ENCODE measurements at regions of chr1 and their contacts with region 1.

Region 1: GRCh38 chr1:117895482-117896114 is 33.8 kb downstream of the GDAP2 start:
- DNase-seq: peak; percentile 34
- H3K4me3 ChIP-seq: no peak overlapping the region
- H3K27ac ChIP-seq: peak overlapping the region in 1 of 2 experiments; percentile 29; a peak in 1 of 4 replicates
- H3K4me1 ChIP-seq: no peaks in the 10 kb centered on the region; a peak in 2 of 4 replicates
- H3K27me3 ChIP-seq: no peaks in the 10 kb centered on the region
- CTCF ChIP-seq: peak; percentile 85
- EP300 ChIP-seq: no peak
- RAD21 ChIP-seq: peak; percentile 89

Region 2: DNA sequence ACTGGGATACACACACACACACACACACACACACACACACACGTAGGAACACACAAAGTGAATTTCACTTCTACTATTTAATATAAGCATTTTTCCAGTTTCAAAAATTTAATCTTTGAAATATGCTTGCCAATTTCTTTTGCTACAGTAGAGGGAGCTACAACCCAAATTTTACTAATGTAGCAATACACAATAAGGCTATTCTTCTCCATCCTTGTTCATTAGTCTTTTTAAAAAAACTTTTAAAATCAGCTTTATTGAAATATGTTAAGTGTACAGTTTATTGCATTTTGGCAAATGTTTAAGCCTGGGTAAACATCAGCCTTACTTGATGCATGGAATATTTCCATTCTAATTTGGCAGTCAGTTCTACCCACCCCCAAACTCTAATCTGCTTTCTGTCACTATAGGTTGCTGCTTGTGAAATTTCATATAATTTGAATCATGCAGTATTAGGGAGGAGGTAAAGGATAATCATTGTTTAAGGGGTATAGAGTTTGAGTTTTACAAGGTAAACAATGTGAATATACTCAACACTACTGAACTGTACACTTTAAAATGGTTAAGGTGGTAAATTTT is 382.8 kb before region 1 on chr1:
- CTCF ChIA-PET with region 1: interaction called, 24 read pairs
- POLR2A ChIA-PET with region 1: no interaction called
- DNase-seq: no peak
- H3K4me3 ChIP-seq: no peak overlapping the region; a peak in 1 of 4 replicates
- H3K27ac ChIP-seq: no peak overlapping the region
- H3K4me1 ChIP-seq: no peaks in the 10 kb centered on the region
- H3K27me3 ChIP-seq: no peaks in the 10 kb centered on the region
- CTCF ChIP-seq: peak; percentile 82
- EP300 ChIP-seq: no peak
- RAD21 ChIP-seq: peak; percentile 82

Region 3: GRCh38 chr1:117815926-117816325 is 79.7 kb before region 1 on chr1:
- CTCF ChIA-PET with region 1: interaction called, 57 read pairs
- POLR2A ChIA-PET with region 1: no interaction called
- DNase-seq: no peak
- H3K4me3 ChIP-seq: no peak overlapping the region
- H3K27ac ChIP-seq: peak overlapping the region in 1 of 2 experiments; percentile 64; a peak in 1 of 4 replicates
- H3K4me1 ChIP-seq: peaks cover 15 to 26% of the 10 kb centered on the region in 2 experiments; a peak in 3 of 4 replicates
- H3K27me3 ChIP-seq: no peaks in the 10 kb centered on the region
- CTCF ChIP-seq: peak; percentile 41
- EP300 ChIP-seq: no peak
- RAD21 ChIP-seq: peak; percentile 65

Region 4: DNA sequence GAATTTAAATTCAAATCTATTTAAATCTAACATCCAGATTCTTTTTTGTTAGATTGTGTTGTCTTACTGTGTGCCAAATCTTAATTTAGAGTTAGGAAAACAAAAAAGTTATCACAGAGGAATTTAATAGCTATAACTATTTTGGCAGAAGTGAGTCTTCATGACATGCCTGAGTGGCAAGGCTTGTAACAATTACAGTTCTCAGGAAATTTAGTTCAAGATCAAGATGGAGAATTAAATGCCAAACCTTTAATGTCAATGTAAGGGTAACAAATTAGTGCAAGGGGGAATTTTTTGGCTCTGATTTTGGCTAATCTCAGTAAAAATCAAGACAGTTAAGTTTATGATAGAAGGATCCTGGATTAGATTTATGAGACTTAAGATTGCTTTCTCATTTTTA is 24.6 kb before region 1 on chr1:
- CTCF ChIA-PET with region 1: interaction called, 29 read pairs
- POLR2A ChIA-PET with region 1: no interaction called
- DNase-seq: no peak
- H3K4me3 ChIP-seq: no peak overlapping the region
- H3K27ac ChIP-seq: no peak overlapping the region
- H3K4me1 ChIP-seq: no peaks in the 10 kb centered on the region
- H3K27me3 ChIP-seq: no peaks in the 10 kb centered on the region
- CTCF ChIP-seq: no peak
- EP300 ChIP-seq: no peak
- RAD21 ChIP-seq: no peak

Region 5: GRCh38 chr1:117883620-117884019 is 12.0 kb before region 1 on chr1:
- CTCF ChIA-PET with region 1: interaction called, 37 read pairs
- POLR2A ChIA-PET with region 1: interaction called, 4 read pairs
- DNase-seq: no peak
- H3K4me3 ChIP-seq: no peak overlapping the region
- H3K27ac ChIP-seq: peak overlapping the region in 1 of 2 experiments; percentile 46; a peak in 2 of 4 replicates
- H3K4me1 ChIP-seq: peaks cover 0 to 13% of the 10 kb centered on the region in 2 experiments; a peak in 2 of 4 replicates
- H3K27me3 ChIP-seq: no peaks in the 10 kb centered on the region
- CTCF ChIP-seq: no peak
- EP300 ChIP-seq: no peak
- RAD21 ChIP-seq: no peak

Region 6: GRCh38 chr1:117929173-117929989 is 33.8 kb after region 1 on chr1 and contains the starts of genes GDAP2 and WDR3:
- CTCF ChIA-PET with region 1: interaction called, 11 read pairs
- POLR2A ChIA-PET with region 1: interaction called, 3 read pairs
- DNase-seq: peak; percentile 91
- H3K4me3 ChIP-seq: peak within 1 kb of the TSS; percentile 88 to 100
- H3K27ac ChIP-seq: peak within 1 kb of the TSS; percentile 65 to 85
- H3K4me1 ChIP-seq: peaks cover 14 to 16% of the 10 kb centered on the region in 2 experiments; a peak in 3 of 4 replicates
- H3K27me3 ChIP-seq: no peaks in the 10 kb centered on the region
- CTCF ChIP-seq: no peak
- EP300 ChIP-seq: no peak
- RAD21 ChIP-seq: no peak
- polyA plus RNA-seq, gene GDAP2: 5.6 and 8.7 TPM in 2 replicates
- polyA plus RNA-seq, gene WDR3: 26.9 and 37.4 TPM in 2 replicates

Region 7: GRCh38 chr1:118113261-118113660 is 217.7 kb after region 1 on chr1:
- CTCF ChIA-PET with region 1: no interaction called
- POLR2A ChIA-PET with region 1: no interaction called
- DNase-seq: no peak
- H3K4me3 ChIP-seq: no peak overlapping the region
- H3K27ac ChIP-seq: no peak overlapping the region
- H3K4me1 ChIP-seq: no peaks in the 10 kb centered on the region
- H3K27me3 ChIP-seq: peaks cover 6% of the 10 kb centered on the region; the same call in 1 of the 2 replicates
- CTCF ChIP-seq: no peak
- EP300 ChIP-seq: no peak
- RAD21 ChIP-seq: no peak

Measured in SK-N-SH (cell line).